A549 (cell line): ENCODE measurements at regions of chr17 and their contacts with region 1.

Region 1: DNA sequence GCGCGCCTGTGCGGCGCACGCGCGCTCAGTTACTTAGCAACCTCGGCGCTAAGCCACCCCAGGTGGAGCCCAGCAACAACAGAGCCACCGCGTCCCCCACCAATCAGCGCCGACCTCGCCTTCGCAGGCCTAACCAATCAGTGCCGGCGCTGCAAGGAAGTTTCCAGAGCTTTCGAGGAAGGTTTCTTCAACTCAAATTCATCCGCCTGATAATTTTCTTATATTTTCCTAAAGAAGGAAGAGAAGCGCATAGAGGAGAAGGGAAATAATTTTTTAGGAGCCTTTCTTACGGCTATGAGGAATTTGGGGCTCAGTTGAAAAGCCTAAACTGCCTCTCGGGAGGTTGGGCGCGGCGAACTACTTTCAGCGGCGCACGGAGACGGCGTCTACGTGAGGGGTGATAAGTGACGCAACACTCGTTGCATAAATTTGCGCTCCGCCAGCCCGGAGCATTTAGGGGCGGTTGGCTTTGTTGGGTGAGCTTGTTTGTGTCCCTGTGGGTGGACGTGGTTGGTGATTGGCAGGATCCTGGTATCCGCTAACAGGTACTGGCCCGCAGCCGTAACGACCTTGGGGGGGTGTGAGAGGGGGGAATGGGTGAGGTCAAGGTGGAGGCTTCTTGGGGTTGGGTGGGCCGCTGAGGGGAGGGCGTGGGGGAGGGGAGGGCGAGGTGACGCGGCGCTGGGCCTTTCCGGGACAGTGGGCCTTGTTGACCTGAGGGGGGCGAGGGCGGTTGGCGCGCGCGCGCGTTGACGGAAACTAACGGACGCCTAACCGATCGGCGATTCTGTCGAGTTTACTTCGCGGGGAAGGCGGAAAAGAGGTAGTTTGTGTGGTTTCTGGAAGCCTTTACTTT is at the start of gene UBB:
- DNase-seq: peak; percentile 92 to 100
- ATAC-seq: peak; percentile 93
- H3K4me3 ChIP-seq: peak within 1 kb of the TSS; percentile 88
- H3K27ac ChIP-seq: peak within 1 kb of the TSS; percentile 91 to 95
- H3K4me1 ChIP-seq: peaks cover 43% of the 10 kb centered on the region
- CTCF ChIP-seq: no peak
- EP300 ChIP-seq: peak; percentile 12 to 56; a peak in 2 of 5 replicates
- POLR2A ChIP-seq: peak; percentile 100
- RAD21 ChIP-seq: no peak
- polyA plus RNA-seq, gene UBB: 2,851 and 4,311 TPM in 2 replicates

Region 2: GRCh38 chr17:16178836-16179235 is 202.0 kb before region 1 on chr17:
- CTCF ChIA-PET with region 1: no interaction called
- POLR2A ChIA-PET with region 1: no interaction called
- DNase-seq: no peak
- ATAC-seq: no peak
- H3K4me3 ChIP-seq: no peak overlapping the region
- H3K27ac ChIP-seq: no peak overlapping the region
- H3K4me1 ChIP-seq: peaks cover 3% of the 10 kb centered on the region; the same call in 1 of the 3 replicates
- CTCF ChIP-seq: no peak
- EP300 ChIP-seq: no peak
- POLR2A ChIP-seq: no peak
- RAD21 ChIP-seq: no peak

Region 3: DNA sequence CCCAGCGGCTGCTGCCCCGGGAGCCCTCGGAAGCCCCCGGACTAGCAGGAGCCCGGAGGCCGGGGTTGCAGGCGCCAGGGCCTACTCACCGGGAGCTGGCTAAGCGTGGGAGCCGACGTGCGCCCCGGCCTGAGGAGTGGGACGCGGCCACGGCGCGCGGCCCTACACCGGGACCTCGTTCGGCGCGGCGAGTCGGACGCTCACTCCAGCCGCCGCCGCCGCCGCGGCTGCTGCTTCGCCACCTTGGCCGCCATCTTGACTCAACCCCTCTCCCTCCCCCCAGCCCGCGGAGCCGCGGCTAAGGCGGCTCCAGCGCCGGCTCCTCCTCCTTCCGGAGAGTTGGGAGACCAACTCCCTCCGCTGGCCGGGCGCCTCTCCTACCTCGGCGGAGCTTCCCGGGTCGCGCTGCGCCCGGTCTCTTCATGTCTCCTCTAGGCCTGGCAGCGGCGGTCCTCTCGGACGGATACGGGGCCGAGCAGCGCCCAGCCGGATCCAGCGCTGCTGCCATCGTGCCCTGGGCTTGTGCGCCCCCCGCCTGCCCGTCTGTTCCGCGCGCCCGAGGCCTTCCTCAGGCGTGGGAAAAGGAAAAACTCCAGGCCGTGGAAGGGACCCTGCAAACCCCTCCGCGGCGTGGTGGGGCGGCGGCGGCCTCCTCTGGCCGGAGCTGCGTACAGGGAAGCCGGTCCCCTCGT is 165.4 kb before region 1 on chr17 and contains the start of gene NCOR1:
- CTCF ChIA-PET with region 1: no interaction called
- POLR2A ChIA-PET with region 1: interaction called, 25 read pairs
- DNase-seq: peak; percentile 80 to 97
- ATAC-seq: peak; percentile 89 to 92
- H3K4me3 ChIP-seq: peak within 1 kb of the TSS; percentile 75
- H3K27ac ChIP-seq: peak within 1 kb of the TSS; percentile 96 to 97
- H3K4me1 ChIP-seq: peaks cover 34% of the 10 kb centered on the region
- CTCF ChIP-seq: peak; percentile 35; the same call in 2 of the 3 replicates
- EP300 ChIP-seq: no peak
- POLR2A ChIP-seq: peak; percentile 98
- RAD21 ChIP-seq: peak; percentile 30 to 48
- polyA plus RNA-seq, gene NCOR1: 190 and 194 TPM in 2 replicates

Region 4: GRCh38 chr17:16407911-16408588 is 27.2 kb after region 1 on chr17:
- CTCF ChIA-PET with region 1: interaction called, 9 read pairs
- POLR2A ChIA-PET with region 1: interaction called, 17 read pairs
- DNase-seq: peak in 1 of 2 experiments; percentile 60
- ATAC-seq: peak; percentile 56 to 69
- H3K4me3 ChIP-seq: no peak overlapping the region
- H3K27ac ChIP-seq: peak overlapping the region in 1 of 2 experiments; percentile 87; a peak in 4 of 6 replicates
- H3K4me1 ChIP-seq: peaks cover 19% of the 10 kb centered on the region
- CTCF ChIP-seq: no peak
- EP300 ChIP-seq: no peak
- POLR2A ChIP-seq: no peak
- RAD21 ChIP-seq: no peak

Region 5: GRCh38 chr17:16438557-16439302 is 57.9 kb after region 1 on chr17:
- CTCF ChIA-PET with region 1: interaction called, 7 read pairs
- POLR2A ChIA-PET with region 1: interaction called, 57 read pairs
- DNase-seq: peak; percentile 100
- ATAC-seq: peak; percentile 84 to 89
- H3K4me3 ChIP-seq: peak overlapping the region; percentile 75
- H3K27ac ChIP-seq: peak overlapping the region; percentile 90 to 99
- H3K4me1 ChIP-seq: peaks cover 37% of the 10 kb centered on the region
- CTCF ChIP-seq: no peak
- EP300 ChIP-seq: no peak
- POLR2A ChIP-seq: peak; percentile 96
- RAD21 ChIP-seq: no peak; a peak in 1 of 5 replicates

Region 6: GRCh38 chr17:16537130-16537458 is 156.2 kb after region 1 on chr17:
- CTCF ChIA-PET with region 1: no interaction called
- POLR2A ChIA-PET with region 1: interaction called, 17 read pairs
- DNase-seq: no peak
- ATAC-seq: no peak
- H3K4me3 ChIP-seq: no peak overlapping the region
- H3K27ac ChIP-seq: no peak overlapping the region
- H3K4me1 ChIP-seq: no peaks in the 10 kb centered on the region
- CTCF ChIP-seq: no peak
- EP300 ChIP-seq: no peak
- POLR2A ChIP-seq: no peak
- RAD21 ChIP-seq: no peak